Common myeloid progenitor, CD34-positive (primary cell): ENCODE measurements at regions of chr4 and their contacts with region 1.

Region 1: GRCh38 chr4:143375313-143376073 is 38.8 kb downstream of the GAB1 start:
- DNase-seq: peak; percentile 57 to 74 (median 74)
- H3K4me3 ChIP-seq: no peak overlapping the region
- H3K27ac ChIP-seq: no peak overlapping the region
- H3K4me1 ChIP-seq: peaks cover 4 to 27% (median 14%) of the 10 kb centered on the region in 4 experiments
- H3K27me3 ChIP-seq: no peaks in the 10 kb centered on the region

Region 2: DNA sequence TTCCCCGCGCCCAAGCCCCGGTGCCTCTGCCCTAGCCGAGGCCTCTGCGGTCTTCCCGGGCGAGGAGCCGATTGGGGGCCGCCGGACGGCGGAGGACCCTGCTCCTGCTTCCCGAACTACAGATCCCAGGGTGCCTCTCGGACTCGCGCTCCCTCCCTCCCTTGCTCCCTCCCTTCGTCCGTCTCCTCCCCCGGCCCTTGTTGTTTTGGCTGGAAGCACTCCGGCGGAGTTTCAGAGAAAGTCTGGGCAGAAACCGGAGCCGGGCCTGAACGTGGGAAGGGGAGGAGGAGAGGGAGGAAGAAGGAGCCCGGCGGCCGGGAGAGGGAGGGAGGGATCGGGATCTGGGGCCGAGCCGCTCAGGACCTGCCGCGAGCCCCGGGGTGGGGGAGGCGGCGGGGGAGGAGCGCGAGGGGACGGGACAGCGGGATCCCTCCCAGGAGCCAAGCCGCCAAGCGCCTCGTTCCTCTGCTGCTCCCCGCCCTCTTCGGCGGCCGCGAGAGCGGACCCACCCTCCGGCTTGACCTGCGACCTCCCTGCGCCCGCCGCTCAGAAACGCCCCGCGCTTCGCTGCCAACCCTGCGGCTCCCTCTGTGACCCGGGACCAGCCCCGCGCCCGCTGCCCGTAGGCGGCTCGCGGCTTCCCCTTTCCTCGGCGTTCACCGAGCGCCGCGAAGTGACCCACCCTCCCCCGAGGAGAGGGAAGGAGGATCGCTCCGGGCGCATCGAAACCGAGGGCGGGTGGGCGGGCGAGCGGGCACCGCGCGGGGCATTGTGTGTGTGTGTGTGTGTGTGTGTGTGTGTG is 39.3 kb before region 1 on chr4:
- CTCF ChIA-PET with region 1: interaction called, 27 read pairs
- POLR2A ChIA-PET with region 1: no interaction called
- DNase-seq: peak; percentile 86 to 92 (median 91)
- H3K4me3 ChIP-seq: peak overlapping the region; percentile 75 to 96 (median 94)
- H3K27ac ChIP-seq: peak overlapping the region; percentile 66 to 82
- H3K4me1 ChIP-seq: peaks cover 6 to 18% (median 12%) of the 10 kb centered on the region in 4 experiments
- H3K27me3 ChIP-seq: no peaks in the 10 kb centered on the region

Region 3: GRCh38 chr4:143346206-143346605 is 29.3 kb before region 1 on chr4:
- CTCF ChIA-PET with region 1: interaction called, 10 read pairs
- POLR2A ChIA-PET with region 1: no interaction called
- DNase-seq: no peak
- H3K4me3 ChIP-seq: no peak overlapping the region
- H3K27ac ChIP-seq: no peak overlapping the region
- H3K4me1 ChIP-seq: peaks cover 0 to 3% (median 0%) of the 10 kb centered on the region in 4 experiments
- H3K27me3 ChIP-seq: no peaks in the 10 kb centered on the region

Region 4: DNA sequence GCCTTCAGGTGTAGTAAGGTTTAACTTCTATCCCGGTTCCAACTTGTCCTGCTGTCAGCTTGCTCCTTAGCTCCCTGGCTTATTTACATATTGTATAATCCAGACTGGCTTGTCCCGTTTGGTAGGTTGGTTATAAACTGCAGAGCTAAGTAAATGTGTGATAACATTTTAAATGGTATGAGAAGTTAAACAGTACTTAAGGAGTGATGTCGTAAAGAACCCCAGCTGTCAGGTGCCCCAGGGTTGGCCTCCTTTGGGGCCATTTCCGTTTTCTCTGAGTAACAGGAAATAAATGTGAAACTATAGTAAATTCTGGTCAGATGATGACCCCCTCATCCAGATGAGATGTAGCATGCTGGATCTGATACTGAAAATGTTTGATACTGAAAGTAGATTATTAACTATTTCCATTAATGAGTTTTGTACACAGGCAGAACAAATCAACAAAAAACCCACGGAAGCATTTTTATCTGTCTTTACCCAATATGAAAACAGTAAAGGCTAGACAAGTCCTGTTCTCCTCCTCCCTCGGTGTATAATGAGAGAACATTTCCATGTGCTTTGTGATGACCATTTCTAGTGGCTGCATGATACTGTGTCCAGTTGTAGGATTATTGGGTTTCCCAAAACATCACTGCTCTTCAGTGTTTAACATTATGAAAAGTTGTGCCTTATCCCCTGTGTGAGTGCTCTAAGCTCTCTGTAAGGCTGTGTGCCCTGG is 16.4 kb before region 1 on chr4:
- CTCF ChIA-PET with region 1: interaction called, 16 read pairs
- POLR2A ChIA-PET with region 1: no interaction called
- DNase-seq: peak; percentile 81 to 96 (median 93)
- H3K4me3 ChIP-seq: peak overlapping the region in 6 of 7 experiments; percentile 24 to 66 (median 52)
- H3K27ac ChIP-seq: peak overlapping the region; percentile 27 to 77
- H3K4me1 ChIP-seq: peaks cover 11 to 56% (median 35%) of the 10 kb centered on the region in 4 experiments
- H3K27me3 ChIP-seq: no peaks in the 10 kb centered on the region

Region 5: DNA sequence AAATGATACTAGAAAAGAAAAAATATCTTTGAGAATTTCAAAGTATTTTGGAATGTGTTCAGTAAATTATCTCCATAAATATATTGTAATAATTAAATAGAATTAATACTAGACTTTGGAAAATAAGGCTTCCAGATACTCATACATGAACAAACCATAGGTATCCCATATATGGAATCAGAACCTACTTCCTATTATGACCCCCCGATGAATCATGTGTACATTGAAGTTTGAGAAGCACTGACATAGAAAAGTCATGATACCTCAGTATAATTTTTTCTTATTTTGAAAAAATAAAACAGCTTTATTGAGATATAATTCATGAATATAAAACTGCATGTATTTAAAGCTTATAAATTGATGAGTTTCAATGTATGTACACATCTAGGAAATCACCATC is 110.8 kb after region 1 on chr4:
- CTCF ChIA-PET with region 1: interaction called, 12 read pairs
- POLR2A ChIA-PET with region 1: no interaction called
- DNase-seq: peak in 1 of 3 donors; percentile 4
- H3K4me3 ChIP-seq: no peak overlapping the region
- H3K27ac ChIP-seq: no peak overlapping the region
- H3K4me1 ChIP-seq: no peaks in the 10 kb centered on the region
- H3K27me3 ChIP-seq: no peaks in the 10 kb centered on the region